Prostate gland (tissue), 2 donors: ENCODE measurements at regions of chr5 and their contacts with region 1.

Region 1: GRCh38 chr5:10479226-10479721 is 37.6 kb downstream of the ROPN1L start:
- DNase-seq: no peak
- H3K4me3 ChIP-seq: no peak overlapping the region
- H3K27ac ChIP-seq: no peak overlapping the region
- H3K4me1 ChIP-seq: no peaks in the 10 kb centered on the region
- H3K27me3 ChIP-seq: no peaks in the 10 kb centered on the region
- CTCF ChIP-seq: no peak
- POLR2A ChIP-seq: no peak

Region 2: DNA sequence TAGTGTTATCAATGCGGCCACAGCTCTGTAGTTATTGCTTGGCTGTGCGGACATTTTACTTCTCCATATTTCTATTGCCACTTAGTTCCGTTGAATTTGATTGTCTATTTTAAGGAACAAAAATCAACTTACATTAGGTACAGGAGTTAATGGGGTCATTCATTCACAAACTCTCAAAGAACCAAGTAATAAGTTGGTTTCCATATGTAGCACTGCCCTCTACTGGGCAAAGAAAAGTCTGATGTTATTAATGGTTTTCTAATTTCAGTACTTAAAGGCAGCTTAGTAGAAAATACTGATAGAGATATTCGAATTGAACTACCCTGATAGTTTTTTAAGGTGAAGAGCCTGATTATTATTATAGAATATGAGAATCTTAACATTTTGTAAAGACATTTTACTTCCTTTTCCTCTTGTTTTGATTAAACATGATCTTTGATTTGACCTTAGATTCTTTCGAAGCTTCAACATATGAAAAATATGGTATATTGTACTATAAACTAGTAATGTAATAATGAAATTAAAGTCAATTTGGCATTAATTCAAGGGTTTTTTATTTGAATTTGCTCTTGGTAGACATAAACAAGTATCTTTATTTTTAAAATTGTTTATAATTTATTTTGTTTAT is 1544.5 kb after region 1 on chr5:
- intact Hi-C with region 1: loop called (anchors 10 kb)
- DNase-seq: no peak
- H3K4me3 ChIP-seq: no peak overlapping the region
- H3K27ac ChIP-seq: no peak overlapping the region
- H3K4me1 ChIP-seq: no peaks in the 10 kb centered on the region
- H3K27me3 ChIP-seq: no peaks in the 10 kb centered on the region
- CTCF ChIP-seq: peak; percentile 16 to 53 (median 42)
- POLR2A ChIP-seq: no peak